GM23248 (cell line): ENCODE measurements at regions of chr2 and their contacts with region 1.

Region 1: GRCh38 chr2:236352761-236353593 is 88.8 kb upstream of the ASB18 start:
- DNase-seq: peak; percentile 67
- H3K4me3 ChIP-seq: no peak overlapping the region
- H3K27ac ChIP-seq: no peak overlapping the region
- H3K4me1 ChIP-seq: no peaks in the 10 kb centered on the region
- H3K27me3 ChIP-seq: peaks cover 15% of the 10 kb centered on the region

Region 2: GRCh38 chr2:237060534-237061312 is 707.7 kb after region 1 on chr2:
- in situ Hi-C with region 1: loop called (anchors 5 kb)
- DNase-seq: peak; percentile 80
- H3K4me3 ChIP-seq: no peak overlapping the region
- H3K27ac ChIP-seq: no peak overlapping the region
- H3K4me1 ChIP-seq: peaks cover 3% of the 10 kb centered on the region; the same call in 1 of the 2 replicates
- H3K27me3 ChIP-seq: no peaks in the 10 kb centered on the region